CD4-positive, alpha-beta T cell (primary cell): ENCODE measurements at regions of chr4 and their contacts with region 1.

Region 1: GRCh38 chr4:148447681-148448080 is 5.5 kb upstream of the NR3C2 start:
- DNase-seq: peak in 8 of 14 experiments; percentile 6 to 79 (median 50)
- ATAC-seq: peak; percentile 5
- H3K4me3 ChIP-seq: no peak overlapping the region
- H3K4me3 Mint-ChIP-seq: peak overlapping the region; percentile 94
- H3K27ac ChIP-seq: no peak overlapping the region
- H3K27ac Mint-ChIP-seq: peak overlapping the region; percentile 92
- H3K4me1 ChIP-seq: peaks cover 26% of the 10 kb centered on the region
- H3K4me1 Mint-ChIP-seq: peaks cover 29% of the 10 kb centered on the region
- H3K27me3 ChIP-seq: no peaks in the 10 kb centered on the region
- H3K27me3 Mint-ChIP-seq: peaks cover 5% of the 10 kb centered on the region
- CTCF ChIP-seq: no peak

Region 2: GRCh38 chr4:148376151-148376550 is 71.5 kb before region 1 on chr4:
- CTCF ChIA-PET with region 1: no interaction called
- POLR2A ChIA-PET with region 1: interaction called, 111 read pairs
- intact Hi-C with region 1: loop called (anchors 5 kb)
- DNase-seq: peak; percentile 12 to 84 (median 54)
- ATAC-seq: peak; percentile 88
- H3K4me3 ChIP-seq: peak overlapping the region; percentile 31
- H3K4me3 Mint-ChIP-seq: peak overlapping the region; percentile 84
- H3K27ac ChIP-seq: peak overlapping the region in 1 of 2 donors; percentile 59
- H3K27ac Mint-ChIP-seq: peak overlapping the region; percentile 93
- H3K4me1 ChIP-seq: peaks cover 4% of the 10 kb centered on the region
- H3K4me1 Mint-ChIP-seq: peaks cover 52% of the 10 kb centered on the region
- H3K27me3 ChIP-seq: no peaks in the 10 kb centered on the region
- H3K27me3 Mint-ChIP-seq: no peaks in the 10 kb centered on the region
- CTCF ChIP-seq: no peak

Region 3: DNA sequence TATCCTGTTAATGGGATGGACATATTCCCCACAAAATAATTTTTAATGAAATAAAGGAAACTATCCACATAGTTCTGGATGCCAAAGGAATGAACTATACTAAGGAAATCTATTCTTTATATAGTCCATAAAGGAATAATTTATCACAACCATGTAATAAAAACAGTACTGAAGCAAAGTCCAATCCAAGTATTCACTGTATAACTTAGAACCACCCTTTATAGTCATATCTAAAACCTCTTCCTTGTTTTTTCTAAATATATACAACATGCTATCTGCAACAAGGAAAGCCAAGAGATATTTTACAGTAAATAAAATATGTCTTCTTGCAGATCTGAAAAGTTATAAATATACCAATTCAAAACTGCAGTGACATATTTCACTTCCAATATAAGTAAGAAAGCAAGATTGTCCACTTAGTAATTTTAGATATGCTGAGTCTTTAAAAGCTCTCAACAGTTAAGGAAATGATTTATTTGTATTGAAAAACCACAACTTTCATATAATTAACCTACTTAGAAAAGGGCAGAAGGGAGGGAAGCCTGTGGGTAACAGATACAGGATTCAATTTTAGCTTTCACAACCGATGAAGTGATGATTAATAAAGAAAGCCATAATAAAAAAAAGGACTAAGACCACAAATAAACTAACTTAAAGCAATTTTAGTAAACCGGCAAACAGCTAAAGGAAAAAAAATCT is 13.5 kb before region 1 on chr4:
- CTCF ChIA-PET with region 1: interaction called, 4 read pairs
- POLR2A ChIA-PET with region 1: interaction called, 6 read pairs
- intact Hi-C with region 1: loop called in 1 of 2 experiments (anchors 1 kb)
- DNase-seq: peak in 1 of 14 experiments; percentile 28
- ATAC-seq: no peak
- H3K4me3 ChIP-seq: peak overlapping the region; percentile 0
- H3K4me3 Mint-ChIP-seq: peak overlapping the region; percentile 54
- H3K27ac ChIP-seq: no peak overlapping the region
- H3K27ac Mint-ChIP-seq: no peak overlapping the region
- H3K4me1 ChIP-seq: peaks cover 14% of the 10 kb centered on the region
- H3K4me1 Mint-ChIP-seq: peaks cover 94% of the 10 kb centered on the region
- H3K27me3 ChIP-seq: no peaks in the 10 kb centered on the region
- H3K27me3 Mint-ChIP-seq: no peaks in the 10 kb centered on the region
- CTCF ChIP-seq: no peak

Region 4: GRCh38 chr4:149234798-149235197 is 787.1 kb after region 1 on chr4:
- CTCF ChIA-PET with region 1: no interaction called
- POLR2A ChIA-PET with region 1: no interaction called
- intact Hi-C with region 1: no loop called
- DNase-seq: no peak
- ATAC-seq: no peak
- H3K4me3 ChIP-seq: no peak overlapping the region
- H3K4me3 Mint-ChIP-seq: no peak overlapping the region
- H3K27ac ChIP-seq: no peak overlapping the region
- H3K27ac Mint-ChIP-seq: no peak overlapping the region
- H3K4me1 ChIP-seq: no peaks in the 10 kb centered on the region
- H3K4me1 Mint-ChIP-seq: no peaks in the 10 kb centered on the region
- H3K27me3 ChIP-seq: no peaks in the 10 kb centered on the region
- H3K27me3 Mint-ChIP-seq: no peaks in the 10 kb centered on the region
- CTCF ChIP-seq: no peak